Natural killer cell (primary cell): ENCODE measurements at regions of chr13 and their contacts with region 1.

Region 1: GRCh38 chr13:30739761-30740642 is 4.7 kb downstream of the ALOX5AP start:
- DNase-seq: peak in 1 of 2 donors; percentile 84
- ATAC-seq: peak; percentile 32 to 67 (median 35)
- H3K4me3 ChIP-seq: peak overlapping the region; percentile 11
- H3K4me3 Mint-ChIP-seq: peak overlapping the region; percentile 81
- H3K27ac ChIP-seq: peak overlapping the region; percentile 70
- H3K27ac Mint-ChIP-seq: peak overlapping the region; percentile 90 to 91
- H3K4me1 ChIP-seq: peaks cover 87% of the 10 kb centered on the region
- H3K4me1 Mint-ChIP-seq: peaks cover 80 to 83% of the 10 kb centered on the region in 2 donors
- H3K27me3 ChIP-seq: no peaks in the 10 kb centered on the region
- H3K27me3 Mint-ChIP-seq: no peaks in the 10 kb centered on the region
- CTCF ChIP-seq: no peak

Region 2: DNA sequence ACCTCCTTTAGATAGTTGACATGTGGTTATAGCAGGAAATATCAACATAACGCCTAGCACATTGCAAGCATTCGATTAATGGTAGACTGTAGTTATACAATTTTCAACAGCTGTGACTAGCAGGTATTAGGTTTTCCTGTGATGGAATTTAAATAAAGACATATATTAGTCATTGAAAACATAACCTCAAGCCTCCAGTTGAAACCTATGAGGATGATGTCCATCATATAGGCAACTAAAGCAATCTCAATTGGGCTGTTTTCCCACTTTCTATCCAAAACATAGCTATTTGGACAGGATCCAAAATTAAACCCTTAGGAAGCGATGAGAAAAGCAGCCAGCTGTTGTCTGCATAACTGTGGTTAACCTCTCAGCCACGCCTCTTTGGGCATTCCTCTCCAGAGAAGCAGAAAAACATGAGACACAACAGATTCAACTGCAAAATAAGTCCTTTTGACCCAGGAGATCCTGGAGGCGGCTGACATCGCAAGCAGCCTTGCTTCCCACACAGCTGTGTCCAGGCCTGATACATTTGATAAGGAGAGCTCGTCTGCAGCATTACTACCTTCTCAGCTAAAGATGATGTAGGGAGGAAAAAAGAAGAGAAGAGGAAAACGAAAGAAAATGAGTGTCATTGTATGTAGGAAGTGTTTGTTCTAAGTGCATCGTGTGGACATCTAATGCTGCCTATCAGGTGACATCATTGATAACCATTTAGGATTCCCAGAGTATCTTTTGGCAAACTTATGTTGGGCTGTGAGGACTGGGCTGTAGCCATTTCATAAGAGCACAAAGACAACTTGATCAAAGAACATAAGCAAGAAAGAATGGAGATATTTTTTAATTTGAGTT is 837.7 kb before region 1 on chr13:
- intact Hi-C with region 1: loop called (anchors 5 kb)
- DNase-seq: peak; percentile 52 to 78
- ATAC-seq: peak; percentile 85 to 94 (median 93)
- H3K4me3 ChIP-seq: peak overlapping the region; percentile 25
- H3K4me3 Mint-ChIP-seq: peak overlapping the region; percentile 93
- H3K27ac ChIP-seq: peak overlapping the region; percentile 73
- H3K27ac Mint-ChIP-seq: peak overlapping the region; percentile 81 to 93
- H3K4me1 ChIP-seq: peaks cover 22% of the 10 kb centered on the region
- H3K4me1 Mint-ChIP-seq: peaks cover 39 to 40% of the 10 kb centered on the region in 2 donors
- H3K27me3 ChIP-seq: peaks cover 4% of the 10 kb centered on the region
- H3K27me3 Mint-ChIP-seq: peaks cover 0 to 2% of the 10 kb centered on the region in 2 donors
- CTCF ChIP-seq: no peak

Region 3: GRCh38 chr13:30371649-30372265 is 368.2 kb before region 1 on chr13:
- intact Hi-C with region 1: loop called (anchors 5 kb)
- DNase-seq: peak in 1 of 2 donors; percentile 88
- ATAC-seq: peak in 2 of 3 donors; percentile 27 to 53
- H3K4me3 ChIP-seq: no peak overlapping the region
- H3K4me3 Mint-ChIP-seq: peak overlapping the region; percentile 56
- H3K27ac ChIP-seq: peak overlapping the region; percentile 64
- H3K27ac Mint-ChIP-seq: peak overlapping the region; percentile 84 to 98
- H3K4me1 ChIP-seq: peaks cover 81% of the 10 kb centered on the region
- H3K4me1 Mint-ChIP-seq: peaks cover 68 to 78% of the 10 kb centered on the region in 2 donors
- H3K27me3 ChIP-seq: no peaks in the 10 kb centered on the region
- H3K27me3 Mint-ChIP-seq: no peaks in the 10 kb centered on the region
- CTCF ChIP-seq: no peak

Region 4: GRCh38 chr13:30673669-30674521 is 66.1 kb before region 1 on chr13:
- intact Hi-C with region 1: loop called (anchors 1 kb)
- DNase-seq: peak; percentile 93 to 95
- ATAC-seq: peak; percentile 95 to 99 (median 97)
- H3K4me3 ChIP-seq: peak overlapping the region; percentile 79
- H3K4me3 Mint-ChIP-seq: peak overlapping the region; percentile 95
- H3K27ac ChIP-seq: peak overlapping the region; percentile 83
- H3K27ac Mint-ChIP-seq: peak overlapping the region; percentile 94 to 96
- H3K4me1 ChIP-seq: peaks cover 10% of the 10 kb centered on the region
- H3K4me1 Mint-ChIP-seq: peaks cover 26 to 33% of the 10 kb centered on the region in 2 donors
- H3K27me3 ChIP-seq: no peaks in the 10 kb centered on the region
- H3K27me3 Mint-ChIP-seq: no peaks in the 10 kb centered on the region
- CTCF ChIP-seq: peak; percentile 77

Region 5: DNA sequence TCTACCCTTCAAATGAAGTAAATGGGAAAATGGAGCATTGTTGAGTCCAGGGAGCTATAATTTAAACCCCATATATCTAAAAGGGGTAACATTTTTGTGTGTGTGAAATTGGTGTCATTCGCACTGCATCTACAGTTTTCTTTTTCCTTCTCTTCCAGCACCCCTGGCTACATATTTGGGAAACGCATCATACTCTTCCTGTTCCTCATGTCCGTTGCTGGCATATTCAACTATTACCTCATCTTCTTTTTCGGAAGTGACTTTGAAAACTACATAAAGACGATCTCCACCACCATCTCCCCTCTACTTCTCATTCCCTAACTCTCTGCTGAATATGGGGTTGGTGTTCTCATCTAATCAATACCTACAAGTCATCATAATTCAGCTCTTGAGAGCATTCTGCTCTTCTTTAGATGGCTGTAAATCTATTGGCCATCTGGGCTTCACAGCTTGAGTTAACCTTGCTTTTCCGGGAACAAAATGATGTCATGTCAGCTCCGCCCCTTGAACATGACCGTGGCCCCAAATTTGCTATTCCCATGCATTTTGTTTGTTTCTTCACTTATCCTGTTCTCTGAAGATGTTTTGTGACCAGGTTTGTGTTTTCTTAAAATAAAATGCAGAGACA is 23.9 kb after region 1 on chr13:
- intact Hi-C with region 1: loop called (anchors 1 kb)
- DNase-seq: no peak
- ATAC-seq: no peak
- H3K4me3 ChIP-seq: no peak overlapping the region
- H3K4me3 Mint-ChIP-seq: no peak overlapping the region
- H3K27ac ChIP-seq: no peak overlapping the region
- H3K27ac Mint-ChIP-seq: peak overlapping the region in 1 of 2 donors; percentile 29
- H3K4me1 ChIP-seq: peaks cover 8% of the 10 kb centered on the region
- H3K4me1 Mint-ChIP-seq: peaks cover 43 to 46% of the 10 kb centered on the region in 2 donors
- H3K27me3 ChIP-seq: no peaks in the 10 kb centered on the region
- H3K27me3 Mint-ChIP-seq: no peaks in the 10 kb centered on the region
- CTCF ChIP-seq: no peak

Region 6: DNA sequence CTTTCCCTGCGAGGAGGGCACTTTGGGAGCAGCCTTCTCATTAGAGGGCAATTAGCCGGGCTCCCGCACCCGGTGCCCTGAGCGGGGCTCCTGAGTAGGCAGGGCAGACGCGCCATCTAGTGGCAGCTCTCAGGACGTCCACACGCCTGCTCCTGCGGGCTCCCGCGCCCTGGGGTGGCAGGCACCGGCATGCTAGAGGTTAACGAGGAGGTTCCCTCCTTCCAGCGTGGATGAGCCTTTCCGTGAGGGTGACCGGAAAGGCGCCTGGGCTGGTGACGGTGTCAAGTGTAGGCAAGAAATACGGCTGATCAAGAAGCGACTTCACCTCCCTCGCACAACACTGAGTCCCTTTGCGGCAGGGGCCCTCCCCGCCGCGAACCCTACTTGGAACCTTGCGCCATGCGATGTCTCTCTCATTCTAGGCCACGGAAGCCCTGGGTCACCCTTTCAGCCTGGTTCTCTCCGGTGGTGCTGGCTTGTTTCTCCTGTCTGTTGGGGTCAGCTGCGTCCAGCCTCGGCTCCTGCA is 63.0 kb after region 1 on chr13:
- intact Hi-C with region 1: loop called (anchors 2 kb)
- DNase-seq: peak; percentile 73 to 90
- ATAC-seq: peak; percentile 92 to 99 (median 99)
- H3K4me3 ChIP-seq: peak overlapping the region; percentile 21
- H3K4me3 Mint-ChIP-seq: peak overlapping the region; percentile 66
- H3K27ac ChIP-seq: no peak overlapping the region
- H3K27ac Mint-ChIP-seq: peak overlapping the region in 1 of 2 donors; percentile 81
- H3K4me1 ChIP-seq: peaks cover 10% of the 10 kb centered on the region
- H3K4me1 Mint-ChIP-seq: peaks cover 14% of the 10 kb centered on the region in 2 donors
- H3K27me3 ChIP-seq: no peaks in the 10 kb centered on the region
- H3K27me3 Mint-ChIP-seq: no peaks in the 10 kb centered on the region
- CTCF ChIP-seq: peak; percentile 98